Naive thymus-derived CD8-positive, alpha-beta T cell (primary cell): ENCODE measurements at regions of chr7 and their contacts with region 1.

Region 1: GRCh38 chr7:107580716-107581383 is 804 bp downstream of the BCAP29 start:
- DNase-seq: no peak
- ATAC-seq: no peak
- H3K4me3 Mint-ChIP-seq: peak overlapping the region; percentile 76 to 93 (median 82)
- H3K27ac Mint-ChIP-seq: peak overlapping the region in 9 of 10 donors; percentile 43 to 85 (median 70)
- H3K4me1 Mint-ChIP-seq: peaks cover 3 to 31% (median 18%) of the 10 kb centered on the region in 4 donors
- H3K27me3 Mint-ChIP-seq: no peaks in the 10 kb centered on the region

Region 2: GRCh38 chr7:107563775-107564552 is 16.9 kb before region 1 on chr7 and contains the starts of genes COG5 and DUS4L:
- POLR2A ChIA-PET with region 1: interaction called, 10 read pairs
- DNase-seq: peak; percentile 79 to 90 (median 83)
- ATAC-seq: peak; percentile 84 to 85
- H3K4me3 Mint-ChIP-seq: peak within 1 kb of the TSS; percentile 85 to 95 (median 90)
- H3K27ac Mint-ChIP-seq: peak within 1 kb of the TSS; percentile 92 to 98 (median 96)
- H3K4me1 Mint-ChIP-seq: peaks cover 40 to 62% (median 59%) of the 10 kb centered on the region in 4 donors
- H3K27me3 Mint-ChIP-seq: no peaks in the 10 kb centered on the region
- polyA plus RNA-seq, gene COG5: 24.3 to 30.9 (median 29.6) TPM
- polyA plus RNA-seq, gene DUS4L: 5.6 to 9.5 (median 9.0) TPM